Activated T-helper 2 cell treated with anti-CD3 and anti-CD28 coated beads, Interferon-gamma antibody, Interleukin-2, Interleukin-4, amounts not matched to agents 10 μg/mL and 5 μg/mL and 100 μg/mL, durations not matched to agents 14 hours and 24 hours and 36 hours (primary cell): ENCODE measurements at regions of chr3 and their contacts with region 1.

Region 1: DNA sequence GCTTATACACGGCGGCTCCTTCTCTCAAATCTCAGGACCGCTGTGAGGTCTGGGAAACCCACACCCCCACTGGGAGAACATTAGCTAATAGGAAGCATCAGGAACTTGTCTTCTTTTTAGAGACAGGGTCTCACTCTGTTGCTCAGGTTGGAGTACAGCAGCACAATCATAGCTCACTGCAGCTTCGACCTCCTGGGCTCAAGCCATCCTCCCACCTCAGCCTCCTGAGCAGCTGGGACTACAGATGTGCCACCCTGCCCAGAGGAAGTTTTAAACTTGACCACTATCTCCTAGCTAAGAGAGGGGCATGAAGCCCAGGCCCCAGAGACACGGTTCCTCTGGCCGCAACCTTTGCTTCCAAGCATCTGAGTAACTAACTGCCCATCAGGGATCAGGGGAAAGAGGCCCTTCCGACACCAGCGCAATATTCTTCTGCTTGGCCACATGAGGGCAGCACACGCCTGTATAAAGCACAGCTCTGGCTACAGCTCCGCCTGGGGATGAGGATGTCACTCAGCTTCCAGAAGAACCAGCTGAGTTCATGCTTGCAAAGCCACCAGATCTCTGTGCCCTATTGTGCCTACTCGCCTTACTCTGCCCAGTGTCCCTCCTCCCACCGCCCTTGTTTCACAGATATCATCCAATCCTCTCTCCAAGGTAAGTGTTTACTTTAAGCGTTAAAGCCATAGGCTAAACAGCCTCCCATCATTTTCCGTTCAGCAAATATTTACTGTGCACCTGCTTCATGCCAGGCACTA is 57.5 kb upstream of the SLC6A11 start:
- DNase-seq: peak; percentile 25
- H3K4me3 Mint-ChIP-seq: no peak overlapping the region
- H3K27ac Mint-ChIP-seq: no peak overlapping the region
- H3K4me1 Mint-ChIP-seq: peaks cover 5% of the 10 kb centered on the region
- H3K27me3 Mint-ChIP-seq: peaks cover 12% of the 10 kb centered on the region

Region 2: DNA sequence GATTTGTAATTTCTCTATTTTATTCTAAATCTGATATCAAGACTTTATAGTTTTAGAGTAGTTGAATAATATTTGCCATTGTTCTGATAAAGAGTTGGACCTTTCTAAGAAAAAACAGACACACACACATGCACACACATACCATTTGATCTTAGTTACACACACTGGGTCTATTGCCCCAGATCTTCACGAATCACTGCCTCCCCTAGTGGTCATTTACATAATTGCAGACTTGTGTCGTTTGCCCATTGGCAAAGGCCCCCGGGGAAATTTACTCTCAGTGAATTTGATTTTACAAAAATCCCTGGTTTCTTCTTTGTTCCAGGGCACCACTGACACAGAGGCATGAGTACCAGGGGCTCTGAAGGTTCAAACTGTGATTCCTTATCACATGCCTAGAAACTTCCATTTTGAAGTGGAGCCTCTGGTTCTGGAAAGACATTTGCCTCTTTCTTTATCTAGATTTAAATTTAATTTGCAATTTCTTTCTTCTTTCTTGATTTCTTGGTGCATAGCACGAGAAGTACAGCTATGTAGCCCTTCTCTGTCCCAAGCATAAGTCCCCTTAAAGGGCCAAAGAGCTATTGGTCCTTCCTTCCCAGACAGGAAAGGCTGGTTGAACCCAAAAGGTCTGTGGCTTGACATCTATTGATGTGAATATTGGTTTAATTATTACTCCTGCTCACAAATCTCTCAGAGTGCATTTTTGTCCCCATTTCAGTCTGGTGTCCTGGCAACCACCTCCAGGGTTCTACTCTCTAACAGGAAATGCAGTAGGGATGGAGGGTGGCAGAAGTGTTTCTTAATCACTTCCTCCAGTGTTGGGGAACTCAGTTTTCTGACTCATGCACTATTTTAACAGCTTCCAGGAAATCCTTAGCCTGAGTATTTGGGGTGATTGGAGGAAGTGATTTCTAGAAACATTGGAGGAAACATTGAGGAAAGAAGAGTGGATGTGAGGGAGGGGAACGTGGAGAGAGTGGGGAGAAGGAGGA is 25.2 kb after region 1 on chr3:
- intact Hi-C with region 1: loop called (anchors 2 kb)
- DNase-seq: no peak
- H3K4me3 Mint-ChIP-seq: no peak overlapping the region
- H3K27ac Mint-ChIP-seq: no peak overlapping the region
- H3K4me1 Mint-ChIP-seq: peaks cover 6% of the 10 kb centered on the region
- H3K27me3 Mint-ChIP-seq: peaks cover 16% of the 10 kb centered on the region

Region 3: GRCh38 chr3:10798600-10799358 is 40.3 kb after region 1 on chr3:
- intact Hi-C with region 1: no loop called
- DNase-seq: no peak
- H3K4me3 Mint-ChIP-seq: no peak overlapping the region
- H3K27ac Mint-ChIP-seq: no peak overlapping the region
- H3K4me1 Mint-ChIP-seq: no peaks in the 10 kb centered on the region
- H3K27me3 Mint-ChIP-seq: peaks cover 11% of the 10 kb centered on the region